ENCODE measurements at regions of chr3 and their contacts with region 1.

Region 1: DNA sequence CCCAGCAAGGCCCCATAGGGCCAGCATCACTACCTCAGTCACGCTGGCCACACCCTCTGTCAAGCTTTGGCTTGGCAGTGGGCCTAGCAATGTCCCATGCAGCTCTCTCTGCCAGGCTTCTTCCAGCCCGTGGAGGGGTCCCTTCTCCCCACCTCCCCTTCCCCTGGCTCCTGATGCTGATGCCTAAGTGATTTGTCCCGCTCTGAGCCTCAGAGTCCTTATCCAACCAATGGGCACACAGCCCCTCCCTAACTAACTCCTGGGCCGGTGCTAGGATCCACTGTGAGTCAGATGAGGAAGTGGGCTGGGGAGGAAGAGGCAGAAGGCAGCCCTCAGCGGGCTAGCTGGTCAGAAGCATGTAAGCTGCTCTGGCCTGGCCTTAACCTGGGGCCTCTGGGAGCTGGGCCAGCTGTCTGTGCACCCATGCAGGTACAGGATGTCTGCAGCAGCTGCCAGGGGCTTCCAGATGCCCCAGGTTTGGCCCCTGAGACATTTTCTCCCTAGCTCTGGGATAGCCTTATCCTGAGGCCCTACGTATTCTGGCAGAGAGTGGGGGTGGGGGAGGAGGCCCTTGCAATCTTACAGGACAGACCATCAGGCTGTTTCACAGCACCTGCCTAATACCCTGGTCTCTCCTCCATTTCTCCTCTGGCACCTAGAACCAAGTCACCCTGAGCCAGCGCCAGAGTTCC is 740 bp upstream of the ZBTB47 start:
- DNase-seq: peak; percentile 80
- H3K4me3 ChIP-seq: peak overlapping the region; percentile 76 to 78 (median 77)
- H3K27ac ChIP-seq: peak overlapping the region; percentile 57
- H3K4me1 ChIP-seq: peaks cover 36% of the 10 kb centered on the region
- H3K27me3 ChIP-seq: no peaks in the 10 kb centered on the region
- CTCF ChIP-seq: no peak
- POLR2A ChIP-seq: peak; percentile 86

Region 2: GRCh38 chr3:42581709-42582473 is 70.9 kb before region 1 on chr3 and contains the start of gene SEC22C:
- CTCF ChIA-PET with region 1: interaction called, 4 read pairs
- POLR2A ChIA-PET with region 1: no interaction called
- dilution Hi-C with region 1: no loop called
- intact Hi-C with region 1: loop called (anchors 2 kb)
- DNase-seq: peak; percentile 94
- H3K4me3 ChIP-seq: peak within 1 kb of the TSS; percentile 80 to 82 (median 81)
- H3K27ac ChIP-seq: peak within 1 kb of the TSS; percentile 70
- H3K4me1 ChIP-seq: peaks cover 18% of the 10 kb centered on the region
- H3K27me3 ChIP-seq: no peaks in the 10 kb centered on the region
- CTCF ChIP-seq: peak in 1 of 2 donors; percentile 24
- POLR2A ChIP-seq: peak; percentile 76
- total RNA-seq, gene SEC22C: 60.7 and 61.9 TPM in 2 replicates

Region 3: DNA sequence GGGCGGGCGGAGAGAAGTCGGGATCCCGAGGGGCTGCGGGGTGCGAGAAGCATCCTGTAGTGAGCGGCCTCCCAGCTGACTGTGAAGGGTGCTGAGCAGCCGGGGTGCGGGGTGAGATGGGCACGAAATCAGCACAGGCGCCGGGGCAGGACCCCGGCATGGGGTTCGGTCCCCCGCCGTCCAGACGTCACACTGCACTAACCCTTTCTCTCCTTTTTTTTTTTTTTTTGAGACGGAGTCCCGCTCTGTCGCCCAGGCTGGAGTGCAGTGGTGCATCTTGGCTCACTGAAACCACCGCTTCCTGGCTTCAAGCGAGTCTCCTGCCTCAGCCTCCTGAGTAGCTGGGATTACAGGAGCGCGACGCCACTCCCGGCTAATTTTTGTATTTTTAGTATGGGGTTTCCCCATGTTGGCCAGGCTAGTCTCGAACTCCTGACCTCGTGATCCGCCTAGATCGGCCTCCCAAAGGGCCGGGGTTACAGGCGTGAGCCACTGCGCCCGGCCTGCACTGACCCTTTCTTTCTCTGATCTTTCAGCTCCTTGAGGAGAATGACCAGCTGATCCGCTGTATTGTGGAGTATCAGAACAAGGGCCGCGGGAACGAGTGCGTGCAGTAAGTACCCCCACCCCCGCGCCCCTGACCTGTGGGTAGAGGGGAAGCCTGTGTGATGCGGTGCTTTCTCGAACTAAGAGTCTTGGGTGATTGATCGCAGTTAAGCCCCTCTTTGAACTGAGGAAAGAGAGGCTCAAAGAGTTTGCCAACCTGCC is 61.6 kb before region 1 on chr3:
- CTCF ChIA-PET with region 1: interaction called, 5 read pairs
- POLR2A ChIA-PET with region 1: interaction called, 12 read pairs
- dilution Hi-C with region 1: no loop called
- intact Hi-C with region 1: no loop called
- DNase-seq: peak; percentile 31
- H3K4me3 ChIP-seq: peak overlapping the region; percentile 43 to 75 (median 67)
- H3K27ac ChIP-seq: peak overlapping the region; percentile 57
- H3K4me1 ChIP-seq: peaks cover 15% of the 10 kb centered on the region
- H3K27me3 ChIP-seq: no peaks in the 10 kb centered on the region
- CTCF ChIP-seq: no peak
- POLR2A ChIP-seq: no peak

Region 4: DNA sequence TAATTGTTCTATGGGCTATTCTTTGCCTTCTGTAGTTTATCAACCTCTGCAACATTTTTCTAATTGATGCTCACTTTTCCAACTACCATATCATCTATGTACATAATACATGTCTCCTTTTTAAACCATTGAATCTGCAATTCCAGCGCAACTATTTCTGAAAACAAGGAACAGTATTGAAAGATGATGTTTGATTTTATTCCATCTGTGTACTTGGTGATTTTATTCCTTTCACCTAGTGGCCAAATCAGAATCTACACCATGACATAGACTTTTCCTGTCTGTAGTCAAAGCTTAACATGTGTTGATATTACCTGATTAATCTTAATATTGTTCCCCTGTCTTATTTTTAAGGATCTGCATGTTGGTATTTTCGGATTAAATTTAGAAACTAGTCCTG is 39.3 kb before region 1 on chr3:
- CTCF ChIA-PET with region 1: interaction called, 15 read pairs
- POLR2A ChIA-PET with region 1: no interaction called
- dilution Hi-C with region 1: no loop called
- intact Hi-C with region 1: no loop called
- DNase-seq: peak; percentile 36
- H3K4me3 ChIP-seq: no peak overlapping the region
- H3K27ac ChIP-seq: no peak overlapping the region
- H3K4me1 ChIP-seq: peaks cover 32% of the 10 kb centered on the region
- H3K27me3 ChIP-seq: no peaks in the 10 kb centered on the region
- CTCF ChIP-seq: peak in 1 of 2 donors; percentile 9
- POLR2A ChIP-seq: no peak

Region 5: GRCh38 chr3:42683875-42684598 is 31.3 kb after region 1 on chr3:
- CTCF ChIA-PET with region 1: no interaction called
- POLR2A ChIA-PET with region 1: no interaction called
- dilution Hi-C with region 1: no loop called
- intact Hi-C with region 1: loop called (anchors 2 kb)
- DNase-seq: peak; percentile 59
- H3K4me3 ChIP-seq: no peak overlapping the region
- H3K27ac ChIP-seq: no peak overlapping the region
- H3K4me1 ChIP-seq: no peaks in the 10 kb centered on the region
- H3K27me3 ChIP-seq: peaks cover 21 to 32% of the 10 kb centered on the region in 2 experiments
- CTCF ChIP-seq: no peak
- POLR2A ChIP-seq: no peak

Region 6: DNA sequence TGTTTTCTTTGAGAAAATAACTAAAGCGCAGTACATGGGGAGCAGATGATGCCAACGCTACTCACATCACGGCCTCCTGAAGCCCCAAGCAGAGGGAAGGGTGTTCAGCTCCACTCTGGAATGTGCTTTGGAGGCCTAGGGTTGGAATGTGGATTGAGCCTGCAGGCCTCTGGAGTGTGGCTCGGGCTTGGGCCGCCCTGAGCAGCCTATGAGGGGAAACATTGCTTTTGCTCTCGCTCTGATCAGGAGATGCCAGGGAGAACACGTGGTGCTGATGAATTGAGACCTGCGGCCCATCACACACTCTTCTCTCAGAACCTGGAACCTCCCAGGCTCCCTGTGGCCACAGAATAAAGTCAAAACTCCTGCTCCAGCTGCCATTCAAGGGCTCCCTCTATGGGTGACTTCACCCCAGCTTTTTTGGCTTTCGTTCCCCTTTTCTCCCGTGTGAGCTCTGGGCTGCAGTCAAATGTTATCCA is 97.0 kb after region 1 on chr3:
- CTCF ChIA-PET with region 1: no interaction called
- POLR2A ChIA-PET with region 1: no interaction called
- dilution Hi-C with region 1: no loop called
- intact Hi-C with region 1: loop called (anchors 1 kb)
- DNase-seq: no peak
- H3K4me3 ChIP-seq: no peak overlapping the region
- H3K27ac ChIP-seq: no peak overlapping the region
- H3K4me1 ChIP-seq: no peaks in the 10 kb centered on the region
- H3K27me3 ChIP-seq: peaks cover 0 to 2% of the 10 kb centered on the region in 2 experiments
- CTCF ChIP-seq: peak in 1 of 2 donors; percentile 6
- POLR2A ChIP-seq: no peak

Region 7: GRCh38 chr3:42865256-42865655 is 212.5 kb after region 1 on chr3:
- CTCF ChIA-PET with region 1: no interaction called
- POLR2A ChIA-PET with region 1: no interaction called
- dilution Hi-C with region 1: no loop called
- intact Hi-C with region 1: no loop called
- DNase-seq: no peak
- H3K4me3 ChIP-seq: no peak overlapping the region
- H3K27ac ChIP-seq: no peak overlapping the region
- H3K4me1 ChIP-seq: no peaks in the 10 kb centered on the region
- H3K27me3 ChIP-seq: no peaks in the 10 kb centered on the region
- CTCF ChIP-seq: no peak
- POLR2A ChIP-seq: no peak

Measured in endothelial cell of umbilical vein (primary cell).